ENCODE measurements at regions of chr2 and their contacts with region 1.

Region 1: DNA sequence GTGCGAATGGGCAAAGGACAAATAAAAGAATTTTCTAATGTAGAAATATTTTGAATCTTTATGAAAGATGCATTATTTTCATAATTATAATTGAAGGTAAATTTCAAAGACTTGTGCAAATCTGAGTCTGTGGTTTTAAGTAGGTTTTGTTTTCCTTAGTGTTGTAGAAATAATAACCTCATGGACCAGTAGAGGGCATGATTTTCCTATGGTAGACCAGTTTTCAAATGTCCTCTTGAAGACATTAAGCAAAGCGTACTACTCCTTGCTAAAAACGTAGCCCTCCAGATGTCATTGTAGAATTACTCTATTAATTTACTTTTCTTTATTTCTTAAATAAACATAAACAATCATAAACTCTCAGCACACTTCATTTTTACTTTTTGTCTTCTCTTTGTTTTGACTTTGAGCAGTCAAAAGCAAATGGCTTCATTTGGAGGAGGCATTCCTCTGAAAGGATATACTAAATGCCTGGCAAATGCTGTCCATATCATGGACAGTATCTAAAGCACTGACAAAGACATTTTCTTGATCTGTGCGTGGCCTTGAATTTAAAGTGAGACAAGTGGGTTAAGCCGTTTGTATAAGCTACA is 85.8 kb upstream of the FAM237A start:
- DNase-seq: no peak
- H3K4me3 Mint-ChIP-seq: no peak overlapping the region
- H3K27ac Mint-ChIP-seq: no peak overlapping the region
- H3K4me1 Mint-ChIP-seq: peaks cover 13% of the 10 kb centered on the region
- H3K27me3 Mint-ChIP-seq: peaks cover 4% of the 10 kb centered on the region

Region 2: DNA sequence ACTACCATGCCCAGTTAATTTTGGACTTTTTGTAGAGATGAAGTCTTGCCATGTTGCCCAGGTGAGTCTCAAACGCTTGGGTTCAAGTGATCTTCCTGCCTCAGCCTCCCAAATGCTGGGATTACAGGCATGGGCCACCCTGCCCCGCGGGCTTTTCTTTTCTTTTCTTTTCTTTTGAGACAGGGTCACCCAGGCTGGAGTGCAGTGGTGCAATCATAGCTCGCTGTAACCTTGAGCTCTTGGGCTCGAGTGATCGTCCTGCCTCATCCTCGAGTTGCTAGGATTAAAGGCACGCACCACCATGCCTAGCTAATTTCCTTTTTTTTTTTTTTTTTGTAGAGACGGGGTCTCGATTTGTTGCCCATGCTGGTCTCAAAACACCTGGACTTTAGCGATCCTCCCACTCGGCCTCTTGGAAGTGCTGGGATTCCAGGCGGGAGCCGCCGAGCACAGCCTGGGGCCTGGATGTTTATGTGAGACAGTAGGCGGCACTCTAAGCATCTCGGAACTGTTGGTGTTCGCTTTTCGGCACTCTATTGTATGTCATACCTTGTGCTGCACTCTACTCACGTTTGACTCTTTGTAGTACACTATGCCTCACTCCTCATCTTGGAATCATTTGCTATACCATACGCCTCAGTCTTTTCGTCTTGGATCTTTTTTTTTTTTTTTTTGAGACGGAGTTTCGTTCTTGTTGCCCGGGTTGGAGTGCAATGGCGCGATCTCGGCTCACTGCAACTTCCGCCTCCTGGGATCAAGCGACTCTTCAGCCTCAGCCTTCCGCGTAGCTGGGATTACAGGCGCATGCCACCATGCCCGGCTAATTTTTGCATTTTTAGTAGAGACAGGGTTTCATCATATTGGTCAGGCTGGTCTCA is 306.5 kb before region 1 on chr2:
- CTCF ChIA-PET with region 1: no interaction called
- intact Hi-C with region 1: loop called (anchors 2 kb)
- DNase-seq: peak; percentile 17
- H3K4me3 Mint-ChIP-seq: peak overlapping the region; percentile 74
- H3K27ac Mint-ChIP-seq: no peak overlapping the region
- H3K4me1 Mint-ChIP-seq: peaks cover 2% of the 10 kb centered on the region
- H3K27me3 Mint-ChIP-seq: peaks cover 43% of the 10 kb centered on the region

Region 3: DNA sequence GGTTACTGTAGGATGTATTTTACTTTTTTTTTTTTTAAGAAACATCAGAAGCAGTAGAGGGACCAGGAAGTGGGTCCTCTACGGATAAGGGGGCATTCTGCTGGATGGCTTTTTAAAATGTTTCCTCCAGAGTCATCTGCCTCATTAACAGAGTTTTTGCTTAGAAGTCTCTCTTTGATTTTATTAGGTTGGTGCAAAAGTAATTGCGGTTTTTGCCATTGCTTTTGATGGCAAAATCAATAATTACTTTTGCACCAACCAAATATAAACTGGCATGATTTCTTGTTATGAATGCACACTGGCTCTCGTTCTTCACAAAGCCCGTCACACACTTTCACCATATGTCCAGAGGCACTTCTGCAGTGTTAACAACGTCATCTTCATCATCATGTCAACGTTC is 17.3 kb after region 1 on chr2:
- CTCF ChIA-PET with region 1: no interaction called
- intact Hi-C with region 1: no loop called
- DNase-seq: no peak
- H3K4me3 Mint-ChIP-seq: no peak overlapping the region
- H3K27ac Mint-ChIP-seq: no peak overlapping the region
- H3K4me1 Mint-ChIP-seq: no peaks in the 10 kb centered on the region
- H3K27me3 Mint-ChIP-seq: no peaks in the 10 kb centered on the region

Region 4: DNA sequence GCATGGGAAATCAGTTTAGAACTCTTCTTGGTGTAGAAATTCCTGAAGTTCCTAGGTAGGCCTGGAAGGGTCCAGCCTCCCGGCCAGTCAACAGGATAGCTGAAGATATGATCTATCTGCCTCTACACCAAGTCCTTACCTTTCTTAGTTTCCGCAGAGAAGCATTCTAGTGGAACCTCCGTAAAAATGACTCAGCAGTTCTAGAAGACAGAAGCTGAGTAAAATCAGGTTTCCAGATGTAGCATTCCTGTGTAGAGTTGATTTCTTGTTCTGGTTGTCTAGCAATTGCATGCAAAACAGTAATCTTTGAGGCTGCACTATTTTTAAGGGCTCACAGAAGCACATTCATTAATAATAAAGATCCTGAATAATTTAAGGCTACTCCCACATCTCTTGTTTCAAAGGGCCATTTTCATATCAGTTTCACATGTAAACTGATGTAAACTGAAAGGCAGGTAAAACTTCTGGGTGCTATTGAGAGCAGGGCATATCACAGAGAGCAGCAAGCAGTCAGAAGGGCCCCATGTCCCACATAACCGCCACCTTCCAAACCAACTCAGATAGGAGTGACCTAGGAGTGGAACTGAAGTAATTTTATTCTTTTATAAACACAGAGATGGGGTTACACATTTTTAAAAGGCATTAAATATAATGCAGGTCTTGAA is 164.9 kb after region 1 on chr2:
- CTCF ChIA-PET with region 1: no interaction called
- intact Hi-C with region 1: no loop called
- DNase-seq: no peak
- H3K4me3 Mint-ChIP-seq: no peak overlapping the region
- H3K27ac Mint-ChIP-seq: no peak overlapping the region
- H3K4me1 Mint-ChIP-seq: no peaks in the 10 kb centered on the region
- H3K27me3 Mint-ChIP-seq: peaks cover 20% of the 10 kb centered on the region

Region 5: DNA sequence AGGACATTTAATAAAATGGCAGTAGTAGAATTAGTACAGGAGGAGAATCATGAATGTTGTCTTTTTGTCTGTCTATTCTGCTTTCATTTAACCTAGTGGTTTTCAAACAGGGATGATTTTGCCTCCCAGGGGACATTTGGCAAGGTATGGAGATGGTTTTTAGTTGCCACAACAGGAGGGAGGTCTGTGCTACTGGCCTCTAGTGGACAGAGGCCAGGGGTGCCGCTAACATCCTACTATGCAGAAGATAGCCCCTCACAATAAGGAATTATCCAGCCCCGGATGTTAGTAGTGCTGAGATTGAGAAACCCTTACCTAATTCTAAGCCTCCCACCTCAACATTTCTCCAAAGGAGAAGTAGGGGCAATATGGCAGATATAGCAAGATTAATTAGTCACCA is 227.3 kb after region 1 on chr2:
- CTCF ChIA-PET with region 1: interaction called, 3 read pairs
- intact Hi-C with region 1: loop called (anchors 2 kb)
- DNase-seq: no peak
- H3K4me3 Mint-ChIP-seq: no peak overlapping the region
- H3K27ac Mint-ChIP-seq: no peak overlapping the region
- H3K4me1 Mint-ChIP-seq: peaks cover 25% of the 10 kb centered on the region
- H3K27me3 Mint-ChIP-seq: no peaks in the 10 kb centered on the region